A673 (cell line): ENCODE measurements at regions of chr13 and their contacts with region 1.

Region 1: GRCh38 chr13:34076943-34077703 is 259.2 kb downstream of the RFC3 start:
- DNase-seq: peak; percentile 22
- H3K4me3 ChIP-seq: no peak overlapping the region
- H3K27ac ChIP-seq: no peak overlapping the region
- H3K4me1 ChIP-seq: no peaks in the 10 kb centered on the region
- H3K27me3 ChIP-seq: peaks cover 4% of the 10 kb centered on the region
- CTCF ChIP-seq: peak; percentile 67

Region 2: DNA sequence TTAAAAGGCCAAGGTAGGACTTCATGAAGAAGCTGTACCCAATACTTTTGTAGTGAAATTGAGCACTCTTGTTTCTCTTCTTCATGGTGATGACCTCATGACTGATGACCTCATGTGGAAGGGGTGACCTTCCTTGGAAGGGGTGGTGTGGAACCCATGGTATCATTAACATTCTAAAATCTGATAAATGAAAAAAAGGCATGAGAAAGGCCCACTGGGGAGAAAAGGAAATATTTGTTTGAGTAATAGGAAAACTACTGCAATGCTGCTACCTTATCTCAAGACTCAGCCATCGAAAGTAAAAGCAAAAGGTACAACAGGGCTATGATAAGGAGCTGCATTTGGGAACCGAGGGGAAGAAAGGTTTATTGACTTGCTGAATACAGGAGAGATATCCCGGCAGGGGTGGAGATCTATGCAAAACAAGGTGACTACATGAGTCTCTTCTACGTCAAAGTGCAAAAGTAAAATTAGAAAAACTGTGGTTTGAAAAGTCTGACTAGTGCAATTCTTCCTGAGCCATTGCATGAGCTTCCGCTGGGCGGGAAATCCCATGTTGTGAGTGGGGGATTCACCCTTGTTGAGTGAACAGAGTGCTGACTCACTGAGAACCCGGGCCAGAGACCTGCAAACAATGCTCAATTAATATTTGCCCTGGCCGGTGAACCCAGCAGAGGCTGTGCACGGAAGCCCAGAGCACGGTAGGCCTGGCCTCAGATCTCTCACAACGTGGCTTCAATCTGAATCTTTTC is 398.0 kb before region 1 on chr13:
- CTCF ChIA-PET with region 1: no interaction called
- POLR2A ChIA-PET with region 1: no interaction called
- intact Hi-C with region 1: no loop called
- DNase-seq: no peak
- H3K4me3 ChIP-seq: no peak overlapping the region
- H3K27ac ChIP-seq: no peak overlapping the region
- H3K4me1 ChIP-seq: no peaks in the 10 kb centered on the region
- H3K27me3 ChIP-seq: no peaks in the 10 kb centered on the region
- CTCF ChIP-seq: no peak

Region 3: DNA sequence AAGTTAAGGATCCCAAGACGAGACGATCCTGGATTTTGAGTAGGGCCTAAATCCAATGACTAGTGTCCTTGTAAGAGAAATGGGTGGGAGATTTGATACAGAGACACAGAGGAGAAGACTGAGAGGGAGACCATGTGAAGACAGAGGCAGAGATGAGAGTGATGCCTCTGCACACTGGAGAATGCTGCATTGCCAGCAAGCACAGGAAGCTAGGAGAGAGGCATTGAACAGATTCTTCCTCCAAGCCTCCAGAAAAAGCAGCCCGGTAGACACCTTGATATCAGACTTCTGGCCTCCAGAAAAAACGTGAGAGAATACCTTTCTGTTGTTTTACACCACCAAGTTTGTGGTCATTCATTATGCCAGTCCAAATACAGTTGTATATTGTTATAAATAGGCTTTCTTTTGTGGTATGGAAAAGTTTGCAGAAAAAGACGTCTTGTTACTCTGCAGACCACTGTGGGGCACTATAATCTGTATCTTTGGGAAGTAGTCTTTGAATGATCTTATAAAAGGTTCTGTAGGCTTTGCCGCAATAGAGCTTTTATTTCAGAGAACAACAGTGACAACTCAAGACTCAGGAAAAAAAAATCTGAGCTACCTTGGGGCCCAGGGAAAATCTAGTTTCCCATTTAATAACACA is 277.1 kb before region 1 on chr13:
- CTCF ChIA-PET with region 1: no interaction called
- POLR2A ChIA-PET with region 1: no interaction called
- intact Hi-C with region 1: loop called (anchors 10 kb)
- DNase-seq: peak; percentile 54
- H3K4me3 ChIP-seq: no peak overlapping the region
- H3K27ac ChIP-seq: no peak overlapping the region
- H3K4me1 ChIP-seq: no peaks in the 10 kb centered on the region
- H3K27me3 ChIP-seq: no peaks in the 10 kb centered on the region
- CTCF ChIP-seq: peak; percentile 70

Region 4: DNA sequence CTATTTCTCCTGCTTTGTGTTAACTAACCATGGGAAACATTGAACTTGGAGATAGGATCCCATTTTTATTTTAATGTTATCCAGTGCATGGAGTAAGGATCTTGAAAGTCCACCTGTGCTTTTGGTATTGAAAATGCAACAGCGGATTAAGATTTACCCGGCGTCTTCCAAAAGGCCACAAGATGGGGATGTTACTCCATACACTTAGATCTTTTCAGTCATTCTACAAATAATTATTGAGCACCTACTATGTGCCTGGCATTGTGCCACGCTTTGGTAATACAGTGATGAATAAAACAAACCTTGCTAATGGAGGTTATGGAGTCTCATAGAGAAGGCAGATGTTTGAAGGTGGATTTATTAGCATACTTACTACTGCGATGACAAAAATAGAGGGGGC is 202.2 kb before region 1 on chr13:
- CTCF ChIA-PET with region 1: no interaction called
- POLR2A ChIA-PET with region 1: no interaction called
- intact Hi-C with region 1: loop called (anchors 2 kb)
- DNase-seq: no peak
- H3K4me3 ChIP-seq: no peak overlapping the region
- H3K27ac ChIP-seq: no peak overlapping the region
- H3K4me1 ChIP-seq: peaks cover 17% of the 10 kb centered on the region
- H3K27me3 ChIP-seq: no peaks in the 10 kb centered on the region
- CTCF ChIP-seq: peak; percentile 32; the same call in 1 of the 2 replicates

Region 5: DNA sequence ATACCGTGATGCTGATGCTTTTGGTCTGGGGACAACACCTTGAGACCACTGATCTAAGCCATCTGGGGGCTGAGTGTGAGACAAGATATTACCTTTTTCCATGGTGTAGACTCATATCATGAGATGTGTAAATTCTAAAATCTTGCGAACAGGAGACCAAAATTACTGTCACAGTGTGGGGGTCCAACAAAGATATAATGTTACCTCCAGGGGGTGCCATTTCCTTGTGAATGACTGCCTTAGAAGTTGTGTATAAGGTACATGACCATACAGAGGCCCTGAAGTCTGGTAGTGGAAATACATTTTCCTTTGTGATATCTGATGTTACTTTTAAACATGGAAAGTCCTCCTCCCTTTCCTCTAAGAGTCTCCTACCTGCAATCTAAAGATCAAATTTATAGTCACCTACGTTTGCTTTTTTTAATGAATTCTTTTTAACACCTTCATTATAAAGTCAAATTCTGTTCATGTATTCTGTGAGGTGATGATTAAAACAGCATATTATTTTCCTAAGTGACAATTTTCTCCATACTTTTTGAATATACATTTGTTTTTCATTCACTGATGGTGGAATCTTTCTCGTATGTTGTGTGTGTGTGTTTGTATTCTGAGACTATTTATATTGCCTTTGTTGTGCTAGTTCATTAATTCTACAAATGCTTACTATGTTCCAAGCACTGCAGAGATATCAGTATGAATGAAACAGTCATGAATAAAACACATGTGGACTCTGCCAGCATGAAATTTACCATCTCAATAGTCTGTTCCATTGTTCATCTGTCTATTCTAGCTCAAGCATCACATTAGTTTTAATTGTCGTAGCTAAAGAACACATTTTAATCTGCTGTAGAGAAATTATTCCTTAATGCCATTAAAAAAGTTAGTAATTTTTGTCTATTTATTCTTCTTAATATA is 145.5 kb before region 1 on chr13:
- CTCF ChIA-PET with region 1: no interaction called
- POLR2A ChIA-PET with region 1: no interaction called
- intact Hi-C with region 1: loop called (anchors 5 kb)
- DNase-seq: peak; percentile 60
- H3K4me3 ChIP-seq: no peak overlapping the region
- H3K27ac ChIP-seq: no peak overlapping the region
- H3K4me1 ChIP-seq: no peaks in the 10 kb centered on the region
- H3K27me3 ChIP-seq: no peaks in the 10 kb centered on the region
- CTCF ChIP-seq: peak; percentile 60